ENCODE measurements at regions of chr16 and their contacts with region 1.

Region 1: DNA sequence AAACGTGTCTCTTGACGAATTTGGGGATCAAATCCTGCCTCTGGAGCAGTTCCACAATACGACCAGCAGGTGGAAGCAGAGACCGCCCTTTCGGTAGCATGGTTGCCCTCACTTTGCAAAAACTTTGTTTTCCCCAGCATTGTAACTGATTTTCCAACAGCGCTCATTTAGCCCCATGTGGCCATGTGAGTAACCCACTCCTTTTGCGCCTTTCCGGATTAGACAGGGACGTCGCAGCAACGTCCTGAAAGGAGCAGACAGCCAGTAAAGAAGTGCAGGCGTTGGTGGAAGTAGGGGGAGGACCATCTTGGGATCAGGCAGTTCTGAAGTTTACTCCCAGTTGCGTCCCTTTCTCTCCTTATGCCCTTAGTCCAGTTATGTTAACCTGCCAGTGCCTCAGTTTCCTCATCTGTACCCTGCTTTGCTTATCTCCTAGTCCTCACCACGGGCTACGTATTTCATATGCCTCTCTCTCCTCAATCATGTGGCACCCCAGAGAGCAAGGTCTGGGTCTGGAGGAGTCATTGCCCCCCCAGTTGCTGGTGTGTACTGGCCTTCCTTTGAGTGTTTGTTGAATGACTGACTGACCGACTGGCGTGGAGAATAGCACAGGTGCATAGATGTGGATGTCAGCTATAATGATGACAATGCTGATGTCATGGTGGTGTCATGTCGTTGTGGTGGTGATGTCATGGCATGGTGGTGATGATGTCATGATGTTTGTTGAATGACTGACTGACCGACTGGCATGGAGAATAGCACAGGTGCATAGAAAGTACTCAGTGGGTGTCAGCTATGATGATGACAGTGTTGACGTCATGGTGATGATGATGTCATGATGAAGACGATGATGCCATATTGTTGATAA is 22.3 kb downstream of the TMEM114 start:
- DNase-seq: peak; percentile 85 to 92 (median 86)
- H3K4me3 ChIP-seq: no peak overlapping the region
- H3K4me3 Mint-ChIP-seq: no peak overlapping the region
- H3K27ac ChIP-seq: no peak overlapping the region
- H3K27ac Mint-ChIP-seq: peak overlapping the region in 5 of 7 donors; percentile 7 to 85 (median 27)
- H3K4me1 ChIP-seq: no peaks in the 10 kb centered on the region
- H3K4me1 Mint-ChIP-seq: peaks cover 16% of the 10 kb centered on the region
- H3K27me3 ChIP-seq: no peaks in the 10 kb centered on the region
- H3K27me3 Mint-ChIP-seq: peaks cover 6 to 25% (median 10%) of the 10 kb centered on the region in 3 donors
- CTCF ChIP-seq: peak; percentile 97

Region 2: DNA sequence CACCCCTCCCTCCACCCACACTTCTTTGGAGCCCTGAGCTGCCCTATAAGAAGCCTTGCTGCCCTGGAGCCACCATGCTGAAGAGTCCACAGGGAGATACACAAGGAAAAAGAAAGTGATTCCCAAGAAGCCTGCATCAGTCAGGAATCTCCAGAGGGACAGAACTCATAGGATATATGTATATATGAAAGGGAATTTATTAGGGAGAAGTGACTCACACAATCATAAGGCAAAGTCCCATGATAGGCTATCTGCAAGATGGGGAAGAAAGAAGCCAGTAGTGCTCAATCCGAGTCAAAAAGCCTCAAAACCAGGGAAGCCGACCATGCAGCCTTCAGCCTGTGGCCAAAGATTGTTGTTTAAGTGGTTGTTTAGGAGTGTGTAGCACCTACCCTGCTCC is 65.5 kb before region 1 on chr16:
- intact Hi-C with region 1: no loop called
- DNase-seq: no peak
- H3K4me3 ChIP-seq: no peak overlapping the region
- H3K4me3 Mint-ChIP-seq: no peak overlapping the region
- H3K27ac ChIP-seq: no peak overlapping the region
- H3K27ac Mint-ChIP-seq: no peak overlapping the region
- H3K4me1 ChIP-seq: no peaks in the 10 kb centered on the region
- H3K4me1 Mint-ChIP-seq: peaks cover 3% of the 10 kb centered on the region
- H3K27me3 ChIP-seq: no peaks in the 10 kb centered on the region
- H3K27me3 Mint-ChIP-seq: peaks cover 3 to 7% (median 6%) of the 10 kb centered on the region in 3 donors
- CTCF ChIP-seq: no peak

Region 3: DNA sequence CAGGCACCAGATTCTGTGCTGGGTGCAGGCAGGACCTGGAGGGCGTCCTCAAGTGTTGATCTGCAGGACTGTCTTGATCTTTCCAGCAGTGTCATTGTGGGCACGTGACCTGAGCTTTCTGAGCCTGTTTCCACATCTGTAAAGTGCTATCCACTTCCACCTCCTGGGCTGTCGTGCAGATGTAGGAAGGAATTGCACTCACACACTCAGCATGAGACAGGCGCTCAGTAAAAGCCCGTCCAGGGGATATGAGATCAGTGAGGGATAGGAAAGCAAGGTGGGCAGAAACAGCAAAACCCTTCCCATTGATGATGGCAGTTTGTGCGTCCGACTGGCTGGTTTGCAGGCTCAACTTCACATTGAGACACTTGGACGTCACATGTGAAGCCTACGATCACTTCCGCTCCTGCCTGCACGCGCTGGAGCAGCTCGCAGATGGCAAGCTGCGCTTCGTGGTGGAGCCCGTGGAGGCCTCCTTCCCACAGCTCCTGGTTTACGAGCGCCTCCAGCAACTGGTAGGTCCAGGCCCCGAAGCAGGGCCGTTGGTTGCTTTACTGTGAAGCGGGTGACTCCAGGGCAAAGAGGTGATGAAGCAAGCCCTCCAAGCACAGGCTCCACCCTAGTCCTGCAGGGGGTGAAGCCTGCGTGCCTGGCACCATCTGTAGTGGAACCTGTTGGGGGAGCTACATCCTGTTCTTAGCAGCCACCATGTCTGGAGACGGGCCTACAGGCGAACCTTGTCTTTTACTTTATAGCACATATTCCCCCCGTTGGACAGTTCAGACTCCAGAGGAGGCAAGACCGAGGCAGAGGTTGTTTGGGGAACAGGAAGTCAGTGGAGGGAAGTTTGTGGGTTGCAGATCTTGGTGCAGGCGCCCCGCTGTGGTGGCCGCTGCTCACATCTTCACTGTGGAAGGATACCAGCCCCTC is 76.5 kb after region 1 on chr16:
- intact Hi-C with region 1: loop called (anchors 5 kb)
- DNase-seq: peak; percentile 81 to 86 (median 84)
- H3K4me3 ChIP-seq: peak overlapping the region; percentile 35 to 62 (median 35)
- H3K4me3 Mint-ChIP-seq: peak overlapping the region; percentile 75 to 94
- H3K27ac ChIP-seq: peak overlapping the region; percentile 93 to 95
- H3K27ac Mint-ChIP-seq: peak overlapping the region; percentile 96 to 98 (median 98)
- H3K4me1 ChIP-seq: peaks cover 28% of the 10 kb centered on the region in 2 donors
- H3K4me1 Mint-ChIP-seq: peaks cover 37% of the 10 kb centered on the region
- H3K27me3 ChIP-seq: no peaks in the 10 kb centered on the region
- H3K27me3 Mint-ChIP-seq: peaks cover 0 to 2% (median 0%) of the 10 kb centered on the region in 3 donors
- CTCF ChIP-seq: peak; percentile 68

Region 4: GRCh38 chr16:8655184-8655717 is 87.3 kb after region 1 on chr16:
- intact Hi-C with region 1: loop called in 1 of 2 experiments (anchors 5 kb)
- DNase-seq: peak; percentile 50 to 64 (median 52)
- H3K4me3 ChIP-seq: no peak overlapping the region
- H3K4me3 Mint-ChIP-seq: no peak overlapping the region
- H3K27ac ChIP-seq: no peak overlapping the region
- H3K27ac Mint-ChIP-seq: peak overlapping the region in 2 of 7 donors; percentile 27 to 34
- H3K4me1 ChIP-seq: no peaks in the 10 kb centered on the region
- H3K4me1 Mint-ChIP-seq: peaks cover 7% of the 10 kb centered on the region
- H3K27me3 ChIP-seq: no peaks in the 10 kb centered on the region
- H3K27me3 Mint-ChIP-seq: no peaks in the 10 kb centered on the region
- CTCF ChIP-seq: no peak

Region 5: GRCh38 chr16:8674413-8675022 is 106.5 kb after region 1 on chr16 and contains the start of gene ABAT:
- intact Hi-C with region 1: loop called in 1 of 2 experiments (anchors 2 kb)
- DNase-seq: peak; percentile 80 to 85 (median 82)
- H3K4me3 ChIP-seq: peak within 1 kb of the TSS; percentile 35 to 77 (median 48)
- H3K4me3 Mint-ChIP-seq: peak within 1 kb of the TSS; percentile 77 to 90
- H3K27ac ChIP-seq: no peak within 1 kb of the TSS
- H3K27ac Mint-ChIP-seq: peak within 1 kb of the TSS in 5 of 7 donors; percentile 12 to 80 (median 41)
- H3K4me1 ChIP-seq: peaks cover 10 to 14% of the 10 kb centered on the region in 2 donors
- H3K4me1 Mint-ChIP-seq: peaks cover 13% of the 10 kb centered on the region
- H3K27me3 ChIP-seq: peaks cover 0 to 3% of the 10 kb centered on the region in 2 donors
- H3K27me3 Mint-ChIP-seq: peaks cover 4 to 8% (median 5%) of the 10 kb centered on the region in 3 donors
- CTCF ChIP-seq: no peak
- polyA plus RNA-seq, gene ABAT: 4.9 to 11.8 (median 8.7) TPM

Region 6: DNA sequence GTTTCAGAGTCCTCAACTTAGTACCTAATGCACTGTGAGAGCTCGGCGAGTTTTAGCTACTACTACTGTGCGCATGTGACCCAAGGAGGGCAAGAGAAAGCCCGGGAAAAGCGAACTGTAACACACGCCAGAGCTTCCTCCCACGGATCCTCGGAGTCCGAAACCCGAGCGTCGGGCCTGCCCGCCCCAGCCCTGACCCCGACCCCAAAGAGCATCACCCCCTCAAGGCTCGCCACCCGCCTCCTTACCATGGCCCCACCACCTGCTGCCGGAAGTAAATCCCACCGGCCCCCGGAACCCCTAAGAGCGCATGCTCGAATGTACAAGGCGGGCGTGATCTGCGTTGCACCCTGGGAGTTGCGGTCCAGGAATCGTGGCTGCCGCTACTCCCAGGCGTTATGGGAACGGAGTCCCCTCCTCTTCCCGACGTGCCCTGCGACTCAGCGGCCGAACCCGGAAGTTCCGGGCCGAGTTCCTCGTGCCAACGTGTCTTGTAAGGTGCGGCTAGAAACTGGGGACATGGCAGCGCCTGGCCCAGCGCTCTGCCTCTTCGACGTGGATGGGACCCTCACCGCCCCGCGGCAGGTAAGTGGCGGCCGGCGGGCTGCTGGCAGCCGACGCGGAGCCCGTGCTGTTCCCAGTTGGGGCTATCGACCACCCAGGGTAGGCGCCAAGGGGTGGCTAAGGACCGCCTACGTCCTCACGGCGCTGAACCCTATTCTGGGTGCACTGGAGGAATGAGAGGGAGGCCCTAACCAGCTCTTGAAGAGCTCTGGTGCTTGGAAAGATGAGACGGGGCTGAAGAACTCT is 229.6 kb after region 1 on chr16 and contains the starts of genes PMM2 and TMEM186:
- intact Hi-C with region 1: loop called (anchors 5 kb)
- DNase-seq: peak; percentile 93 to 96 (median 94)
- H3K4me3 ChIP-seq: peak within 1 kb of the TSS; percentile 65 to 91 (median 71)
- H3K4me3 Mint-ChIP-seq: peak within 1 kb of the TSS; percentile 96 to 98
- H3K27ac ChIP-seq: peak within 1 kb of the TSS; percentile 21 to 89
- H3K27ac Mint-ChIP-seq: peak within 1 kb of the TSS; percentile 81 to 98 (median 90)
- H3K4me1 ChIP-seq: peaks cover 29 to 37% of the 10 kb centered on the region in 2 donors
- H3K4me1 Mint-ChIP-seq: peaks cover 31% of the 10 kb centered on the region
- H3K27me3 ChIP-seq: no peaks in the 10 kb centered on the region
- H3K27me3 Mint-ChIP-seq: peaks cover 0 to 3% (median 0%) of the 10 kb centered on the region in 3 donors
- CTCF ChIP-seq: no peak
- polyA plus RNA-seq, gene PMM2: 15.2 to 22.9 (median 17.8) TPM
- polyA plus RNA-seq, gene TMEM186: 3.8 to 4.5 (median 4.4) TPM

Region 7: GRCh38 chr16:8878521-8878911 is 310.5 kb after region 1 on chr16:
- intact Hi-C with region 1: loop called in 1 of 2 experiments (anchors 2 kb)
- DNase-seq: no peak
- H3K4me3 ChIP-seq: no peak overlapping the region
- H3K4me3 Mint-ChIP-seq: no peak overlapping the region
- H3K27ac ChIP-seq: no peak overlapping the region
- H3K27ac Mint-ChIP-seq: no peak overlapping the region
- H3K4me1 ChIP-seq: no peaks in the 10 kb centered on the region
- H3K4me1 Mint-ChIP-seq: peaks cover 5% of the 10 kb centered on the region
- H3K27me3 ChIP-seq: no peaks in the 10 kb centered on the region
- H3K27me3 Mint-ChIP-seq: peaks cover 1 to 11% (median 6%) of the 10 kb centered on the region in 3 donors
- CTCF ChIP-seq: no peak

Region 8: DNA sequence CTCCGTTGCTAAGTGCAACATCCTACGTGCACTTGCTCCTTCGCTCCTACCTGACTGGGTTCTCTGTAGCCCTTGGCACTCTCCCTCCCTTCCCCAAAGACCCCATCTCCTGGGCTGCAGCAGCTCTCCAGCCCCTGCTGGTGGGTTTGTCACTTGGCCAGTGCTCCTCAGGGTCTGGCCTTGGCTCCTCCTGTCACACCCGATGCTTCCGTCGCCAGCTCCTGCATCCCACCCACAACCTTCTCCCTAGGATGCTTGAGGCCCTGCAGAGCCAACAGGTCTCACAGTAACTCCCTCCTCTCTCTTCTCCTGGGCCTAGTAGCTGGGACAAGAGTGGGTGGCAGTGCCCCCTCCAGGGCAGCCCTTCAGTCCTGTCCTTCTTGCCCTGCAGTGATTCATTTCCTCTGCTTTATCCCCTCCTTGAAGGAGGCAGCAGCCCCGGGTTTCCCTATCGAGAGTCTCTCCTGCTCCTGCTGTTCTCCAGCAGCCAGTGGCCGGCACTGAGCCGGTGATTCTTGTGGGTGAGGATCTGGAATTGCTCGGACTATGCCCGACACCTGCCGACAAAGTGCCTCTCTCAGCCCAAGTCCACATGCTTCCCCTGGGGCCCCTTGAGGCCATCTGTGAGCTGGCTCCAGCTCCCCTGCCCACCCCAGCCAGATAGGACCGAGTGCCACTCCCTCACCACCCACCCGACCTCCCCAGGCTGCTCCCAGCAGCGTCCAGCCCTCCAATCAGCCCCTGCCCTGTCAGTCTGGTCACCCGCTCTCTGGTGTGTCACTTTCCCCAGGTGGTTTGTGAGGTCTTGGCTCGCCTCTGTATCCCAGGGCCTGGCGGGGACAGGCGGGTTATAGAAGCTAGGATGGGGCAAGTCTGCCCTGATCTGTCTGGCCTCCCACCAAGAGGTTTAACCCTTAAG is 317.9 kb after region 1 on chr16:
- intact Hi-C with region 1: loop called in 1 of 2 experiments (anchors 2 kb)
- DNase-seq: peak in 1 of 3 donors; percentile 30
- H3K4me3 ChIP-seq: no peak overlapping the region
- H3K4me3 Mint-ChIP-seq: peak overlapping the region in 1 of 2 donors; percentile 7
- H3K27ac ChIP-seq: no peak overlapping the region
- H3K27ac Mint-ChIP-seq: peak overlapping the region in 3 of 7 donors; percentile 14 to 64 (median 47)
- H3K4me1 ChIP-seq: no peaks in the 10 kb centered on the region
- H3K4me1 Mint-ChIP-seq: peaks cover 9% of the 10 kb centered on the region
- H3K27me3 ChIP-seq: peaks cover 0 to 14% of the 10 kb centered on the region in 2 donors
- H3K27me3 Mint-ChIP-seq: peaks cover 21 to 25% (median 24%) of the 10 kb centered on the region in 3 donors
- CTCF ChIP-seq: no peak

Measured in CD14-positive monocyte (primary cell).